ENCODE measurements at regions of chr1 and their contacts with region 1.

Region 1: GRCh38 chr1:59498640-59499039 is 201.7 kb downstream of the FGGY start:
- DNase-seq: peak; percentile 35
- H3K4me3 Mint-ChIP-seq: no peak overlapping the region
- H3K27ac Mint-ChIP-seq: peak overlapping the region; percentile 90
- H3K4me1 Mint-ChIP-seq: peaks cover 31% of the 10 kb centered on the region
- H3K27me3 Mint-ChIP-seq: no peaks in the 10 kb centered on the region
- CTCF ChIP-seq: no peak

Region 2: GRCh38 chr1:59367301-59368007 is 131.2 kb before region 1 on chr1:
- CTCF ChIA-PET with region 1: no interaction called
- POLR2A ChIA-PET with region 1: interaction called, 4 read pairs
- intact Hi-C with region 1: loop called (anchors 5 kb)
- DNase-seq: peak; percentile 75
- H3K4me3 Mint-ChIP-seq: peak overlapping the region; percentile 35
- H3K27ac Mint-ChIP-seq: peak overlapping the region; percentile 86
- H3K4me1 Mint-ChIP-seq: peaks cover 42% of the 10 kb centered on the region
- H3K27me3 Mint-ChIP-seq: no peaks in the 10 kb centered on the region
- CTCF ChIP-seq: no peak

Region 3: DNA sequence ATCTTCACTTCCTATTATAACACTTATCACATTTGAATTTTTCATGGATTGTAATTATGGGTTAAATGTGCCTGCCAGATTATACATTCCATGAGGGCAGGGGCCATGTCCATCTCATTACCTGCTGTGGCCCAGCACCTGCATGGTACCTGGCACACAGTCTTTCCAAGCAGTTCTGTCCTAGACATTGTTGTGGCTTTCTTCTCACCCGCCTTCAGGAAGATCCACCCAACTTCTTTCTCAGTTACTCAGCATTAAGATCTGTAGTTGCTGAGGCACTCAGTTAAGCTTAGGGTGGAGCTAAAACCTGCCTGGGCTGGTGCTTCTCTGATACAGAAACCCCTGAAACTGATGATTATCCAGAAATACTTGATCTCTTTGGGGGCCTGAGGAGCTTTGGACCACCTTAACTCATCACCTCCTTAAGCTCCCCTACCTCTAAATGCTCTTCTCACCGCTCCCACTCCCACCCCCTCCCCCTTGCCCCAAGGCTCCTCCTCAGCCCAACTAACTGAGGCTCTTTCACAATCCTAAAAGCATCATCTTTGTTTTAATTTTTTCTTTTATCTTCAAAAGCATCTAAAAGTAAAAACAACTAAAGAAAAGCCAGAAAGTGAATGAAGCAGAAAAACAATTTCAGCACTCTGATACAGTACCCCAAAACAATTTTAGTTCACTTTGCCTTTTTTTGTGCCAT is 11.2 kb before region 1 on chr1:
- CTCF ChIA-PET with region 1: no interaction called
- POLR2A ChIA-PET with region 1: interaction called, 20 read pairs
- intact Hi-C with region 1: no loop called
- DNase-seq: peak; percentile 41
- H3K4me3 Mint-ChIP-seq: peak overlapping the region; percentile 50
- H3K27ac Mint-ChIP-seq: peak overlapping the region; percentile 88
- H3K4me1 Mint-ChIP-seq: peaks cover 30% of the 10 kb centered on the region
- H3K27me3 Mint-ChIP-seq: no peaks in the 10 kb centered on the region
- CTCF ChIP-seq: no peak